Cardiac septum (tissue), 1 donor: ENCODE measurements at regions of chr16 and their contacts with region 1.

Region 1: DNA sequence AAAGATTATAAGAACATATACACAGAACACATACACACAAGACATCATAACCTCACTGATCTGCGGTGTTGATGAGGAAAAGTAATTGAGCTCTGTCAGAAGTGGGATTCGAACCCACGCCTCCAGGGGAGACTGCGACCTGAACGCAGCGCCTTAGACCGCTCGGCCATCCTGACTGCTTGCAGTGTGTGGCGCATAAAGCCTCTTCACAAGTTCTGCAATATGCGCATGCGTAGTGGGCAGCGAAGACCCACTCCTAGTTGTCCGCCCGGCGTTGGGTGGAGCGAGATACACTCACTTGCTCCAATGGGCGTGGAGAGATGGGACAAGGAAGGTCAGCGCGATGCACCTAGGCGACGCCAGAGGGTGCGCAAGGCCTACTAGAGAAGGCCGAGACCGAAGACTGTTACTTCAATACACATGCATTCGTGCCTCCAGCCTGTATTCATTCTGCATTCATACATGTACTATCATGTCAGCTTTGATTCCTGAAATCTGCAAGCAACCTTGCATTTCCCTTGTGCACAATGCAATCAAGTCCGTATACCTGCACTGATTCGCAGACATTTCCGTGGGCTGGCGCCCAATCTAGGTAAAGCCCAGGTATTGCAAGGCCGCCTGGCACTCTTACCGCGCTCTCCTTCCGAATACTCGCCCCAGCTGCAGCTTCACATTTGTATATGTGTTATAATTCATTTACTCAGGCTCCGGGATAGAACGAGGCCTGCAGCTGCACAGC is 16.1 kb upstream of the PLLP start:
- DNase-seq: peak; percentile 99

Region 2: GRCh38 chr16:56151621-56152020 is 1148.9 kb before region 1 on chr16:
- intact Hi-C with region 1: no loop called
- DNase-seq: no peak

Region 3: DNA sequence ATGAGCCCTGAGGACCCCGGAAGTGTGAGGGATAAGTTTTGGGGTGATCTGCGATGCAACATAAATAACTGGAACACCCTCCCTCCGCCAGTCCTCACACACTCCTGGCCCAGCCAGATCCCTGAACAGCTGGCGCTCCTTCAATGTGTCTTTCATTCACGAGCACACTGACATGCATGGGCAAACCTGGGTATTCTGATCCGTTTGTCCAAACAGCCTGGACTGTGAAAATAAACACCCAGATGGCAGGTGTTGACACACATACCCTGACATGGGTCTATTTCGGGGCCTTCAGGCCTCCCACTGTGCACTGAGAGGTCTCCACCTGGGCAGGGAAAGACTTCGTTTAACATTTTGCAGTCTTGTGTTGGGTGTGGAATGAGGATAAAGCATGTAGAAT is 211.2 kb before region 1 on chr16:
- intact Hi-C with region 1: loop called (anchors 5 kb)
- DNase-seq: no peak

Region 4: DNA sequence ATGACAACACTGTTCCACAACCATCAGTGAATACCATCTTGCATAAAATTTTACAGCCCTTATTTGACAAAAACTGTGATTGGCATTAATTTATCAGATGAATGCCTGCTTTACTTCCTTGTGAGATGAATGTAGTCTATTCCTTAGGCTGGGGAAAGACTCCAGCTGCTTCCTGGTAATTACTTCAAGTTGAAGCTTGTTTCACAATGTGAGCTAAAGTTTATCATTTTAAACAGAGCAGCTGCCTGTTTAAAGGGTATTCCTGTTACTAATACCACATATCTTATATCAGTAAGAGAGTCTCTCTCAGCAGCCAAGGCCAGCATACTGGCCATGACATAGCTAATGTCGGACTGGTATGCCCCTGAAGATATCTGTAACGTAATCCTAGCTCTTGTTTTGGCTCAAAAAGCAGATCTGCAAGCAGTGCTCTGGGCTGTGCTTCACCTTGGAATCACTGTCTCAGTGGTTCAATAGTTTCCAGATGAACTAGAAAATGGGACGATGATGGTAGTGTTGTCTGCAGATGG is 68.7 kb before region 1 on chr16:
- intact Hi-C with region 1: no loop called
- DNase-seq: no peak

Region 5: DNA sequence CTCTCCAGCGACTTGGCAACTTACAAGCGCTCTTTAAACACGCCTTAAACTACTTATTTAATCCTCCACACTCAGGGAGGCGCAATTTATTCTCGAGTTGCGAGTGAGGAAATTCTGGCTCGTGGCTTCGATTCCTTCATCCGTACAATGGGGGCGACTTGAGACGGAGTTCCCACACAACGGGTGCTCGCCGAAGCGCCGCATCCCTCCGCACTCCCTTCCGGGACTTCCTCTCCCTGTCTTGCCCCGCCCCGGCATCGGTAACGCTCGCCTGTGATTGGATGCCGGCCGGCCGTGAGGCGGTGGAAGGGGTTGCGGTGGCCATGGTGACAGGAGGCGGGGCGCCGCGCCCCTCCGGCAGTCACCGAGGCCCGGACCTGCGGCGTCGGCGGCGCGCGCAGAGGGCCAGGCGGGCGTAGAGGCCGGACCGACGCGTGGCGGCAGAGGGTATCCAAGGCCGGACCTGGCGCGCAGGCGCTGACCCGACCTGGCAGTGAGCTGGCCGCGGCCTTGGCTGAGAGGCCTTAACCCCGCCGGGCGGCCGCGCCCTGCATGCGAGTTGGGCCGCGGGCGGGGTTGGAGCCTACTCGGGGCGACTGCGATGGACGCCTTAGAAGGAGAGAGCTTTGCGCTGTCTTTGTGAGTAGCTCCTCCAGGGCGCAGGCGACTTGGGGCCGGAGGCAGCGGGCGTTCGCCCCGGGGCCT is 55.6 kb before region 1 on chr16 and contains the start of gene ARL2BP:
- intact Hi-C with region 1: loop called (anchors 2 kb)
- DNase-seq: peak; percentile 99
- total RNA-seq, gene ARL2BP: 41.5 TPM

Region 6: GRCh38 chr16:57422026-57422944 is 121.7 kb after region 1 on chr16:
- intact Hi-C with region 1: loop called (anchors 1 kb)
- DNase-seq: no peak

Region 7: DNA sequence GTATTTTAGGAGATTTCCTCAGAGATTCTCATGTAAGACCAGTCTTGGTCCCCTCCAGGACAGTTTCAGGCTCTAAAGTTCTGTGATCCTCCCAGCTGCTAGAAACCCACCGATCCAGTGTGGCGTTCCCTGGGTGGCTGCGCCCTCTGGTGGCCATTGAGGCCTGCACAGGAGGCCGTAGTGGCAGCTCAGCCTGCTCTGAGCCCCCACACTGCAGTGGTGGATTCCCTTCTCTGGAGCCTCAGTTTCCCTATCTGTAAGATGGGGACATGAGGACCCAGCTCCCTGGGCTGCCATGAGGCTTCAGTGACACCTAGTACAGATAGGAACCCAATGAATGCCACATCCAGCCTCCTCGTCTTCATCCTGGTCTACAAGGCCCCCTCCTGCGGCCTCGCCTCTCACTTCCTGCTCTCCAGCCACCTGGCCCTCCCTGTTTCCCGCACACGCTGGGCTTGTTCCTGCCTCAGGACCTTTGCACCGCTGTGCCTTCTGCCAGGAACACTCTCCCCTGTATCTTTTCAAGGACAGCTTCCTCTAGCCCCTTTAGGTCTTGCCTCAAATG is 219.3 kb after region 1 on chr16:
- intact Hi-C with region 1: loop called (anchors 5 kb)
- DNase-seq: peak; percentile 89